ENCODE measurements at regions of chr3 and their contacts with region 1.

Region 1: DNA sequence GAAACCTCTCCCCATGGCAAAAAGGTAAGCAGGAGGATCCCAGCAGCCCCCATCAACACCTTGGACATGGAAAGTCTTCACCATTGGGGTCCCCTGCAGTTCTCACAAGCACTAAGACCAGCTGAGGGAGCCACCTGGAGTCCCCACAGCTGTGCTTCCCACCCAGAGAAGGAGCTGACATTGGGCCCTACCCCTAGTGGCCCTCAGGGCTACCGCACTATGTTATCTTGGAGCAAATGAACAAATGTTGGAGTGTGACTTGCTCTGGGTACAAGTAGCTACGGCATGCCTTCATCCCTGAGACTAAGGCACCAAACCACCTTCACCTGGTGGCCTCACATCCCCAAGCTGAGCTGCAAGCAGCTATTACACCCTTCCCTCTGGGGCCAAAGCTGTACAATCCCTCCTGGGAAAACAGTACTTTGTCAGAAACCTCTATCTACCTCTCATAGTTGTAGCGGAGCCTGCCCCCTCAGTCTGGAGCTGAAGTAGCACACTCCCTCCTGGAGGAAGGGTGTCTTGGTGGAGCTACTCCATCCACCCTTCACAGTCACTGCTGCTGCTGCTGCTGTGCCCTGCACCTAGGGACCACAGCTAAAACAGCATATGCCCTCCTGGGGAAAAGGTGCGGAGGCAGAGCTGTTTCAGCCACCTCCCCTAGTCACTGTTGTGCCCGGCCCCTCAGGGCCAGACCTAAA is 42.7 kb downstream of the SERP1 start:
- DNase-seq: no peak
- ATAC-seq: peak; percentile 79 to 87
- H3K4me3 ChIP-seq: no peak overlapping the region
- H3K27ac ChIP-seq: no peak overlapping the region
- H3K4me1 ChIP-seq: no peaks in the 10 kb centered on the region
- CTCF ChIP-seq: no peak
- EP300 ChIP-seq: no peak
- POLR2A ChIP-seq: no peak
- RAD21 ChIP-seq: no peak

Region 2: GRCh38 chr3:150521463-150521862 is 17.9 kb after region 1 on chr3:
- CTCF ChIA-PET with region 1: interaction called, 12 read pairs
- POLR2A ChIA-PET with region 1: no interaction called
- DNase-seq: no peak
- ATAC-seq: peak; percentile 64 to 78; a peak in 5 of 6 replicates
- H3K4me3 ChIP-seq: no peak overlapping the region
- H3K27ac ChIP-seq: no peak overlapping the region
- H3K4me1 ChIP-seq: no peaks in the 10 kb centered on the region
- CTCF ChIP-seq: no peak
- EP300 ChIP-seq: no peak
- POLR2A ChIP-seq: no peak
- RAD21 ChIP-seq: no peak